Esophagus squamous epithelium (tissue), 5 donors: ENCODE measurements at regions of chr16 and their contacts with region 1.

Region 1: DNA sequence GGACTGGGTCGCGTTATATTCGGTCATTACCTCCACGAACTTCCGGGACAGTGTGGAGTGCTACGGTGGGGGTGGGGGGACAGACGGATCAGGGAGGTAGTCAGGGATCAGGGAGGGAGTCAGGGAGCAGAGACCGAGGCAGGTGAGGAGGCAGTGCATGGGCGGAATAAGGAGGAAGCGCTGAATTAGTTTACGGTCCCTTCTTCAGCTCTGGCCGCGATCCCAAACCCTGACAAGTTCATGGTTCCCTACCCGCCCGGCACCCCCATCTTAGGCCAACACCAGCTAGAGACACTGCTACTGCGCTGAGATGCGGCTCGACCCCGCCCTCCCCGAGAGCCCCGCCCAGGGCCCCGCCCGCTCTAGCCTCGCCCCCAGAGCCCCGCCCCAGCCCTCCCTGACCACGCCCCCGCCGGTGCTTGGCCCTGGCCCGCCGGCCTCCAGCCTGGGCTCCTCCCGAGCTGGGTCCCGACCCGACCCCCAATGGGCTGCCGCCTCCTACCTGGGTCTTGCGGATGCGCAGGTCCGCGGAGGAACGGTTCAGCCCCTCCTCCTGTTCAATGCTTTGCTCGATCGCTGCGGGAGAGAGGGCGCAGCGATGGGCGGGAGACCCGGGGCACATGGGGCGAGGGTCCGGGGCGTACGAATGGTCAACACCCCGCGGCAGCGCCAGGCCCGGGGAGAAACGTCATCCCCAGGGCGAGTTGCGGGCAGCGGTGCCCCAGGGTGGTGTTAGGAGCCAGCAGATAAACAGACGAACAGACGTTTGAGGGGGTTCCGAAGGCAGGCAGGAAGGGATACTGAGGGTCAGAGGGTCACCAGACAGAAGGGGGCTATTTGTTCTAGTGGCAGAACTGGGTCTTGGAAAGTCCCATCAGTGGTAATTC is 12.2 kb downstream of the HSD3B7 start:
- DNase-seq: no peak
- H3K4me3 ChIP-seq: peak overlapping the region; percentile 38 to 83 (median 58)
- H3K27ac ChIP-seq: peak overlapping the region; percentile 76 to 94 (median 84)
- H3K4me1 ChIP-seq: peaks cover 22 to 60% (median 33%) of the 10 kb centered on the region in 3 donors
- H3K27me3 ChIP-seq: no peaks in the 10 kb centered on the region
- CTCF ChIP-seq: no peak
- POLR2A ChIP-seq: peak in 2 of 4 donors; percentile 54 to 76

Region 2: DNA sequence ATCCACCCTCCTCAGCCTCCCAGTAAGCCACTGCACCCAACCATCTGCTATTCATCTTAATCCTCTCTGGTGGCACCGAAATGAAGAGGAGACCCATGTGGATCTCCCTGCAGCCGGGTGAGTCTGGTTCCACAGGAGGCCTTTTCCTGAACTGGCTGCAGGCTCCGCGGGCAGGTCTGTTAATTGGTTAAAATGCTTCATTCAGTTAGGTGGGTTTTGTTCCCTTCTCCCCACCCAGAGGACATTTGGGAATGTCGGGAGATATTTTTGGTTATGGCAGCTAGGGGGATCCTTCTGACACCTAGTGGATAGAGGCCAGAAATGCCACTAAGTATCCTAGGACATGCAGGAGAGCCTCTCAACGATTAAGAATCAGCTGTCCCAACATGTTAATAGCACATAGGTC is 1268.1 kb before region 1 on chr16:
- intact Hi-C with region 1: no loop called
- DNase-seq: no peak
- H3K4me3 ChIP-seq: no peak overlapping the region
- H3K27ac ChIP-seq: no peak overlapping the region
- H3K4me1 ChIP-seq: peaks cover 0 to 6% (median 0%) of the 10 kb centered on the region in 3 donors
- H3K27me3 ChIP-seq: peaks cover 0 to 20% (median 0%) of the 10 kb centered on the region in 4 donors
- CTCF ChIP-seq: peak in 5 of 6 experiments; percentile 28 to 57 (median 43)
- POLR2A ChIP-seq: no peak

Region 3: DNA sequence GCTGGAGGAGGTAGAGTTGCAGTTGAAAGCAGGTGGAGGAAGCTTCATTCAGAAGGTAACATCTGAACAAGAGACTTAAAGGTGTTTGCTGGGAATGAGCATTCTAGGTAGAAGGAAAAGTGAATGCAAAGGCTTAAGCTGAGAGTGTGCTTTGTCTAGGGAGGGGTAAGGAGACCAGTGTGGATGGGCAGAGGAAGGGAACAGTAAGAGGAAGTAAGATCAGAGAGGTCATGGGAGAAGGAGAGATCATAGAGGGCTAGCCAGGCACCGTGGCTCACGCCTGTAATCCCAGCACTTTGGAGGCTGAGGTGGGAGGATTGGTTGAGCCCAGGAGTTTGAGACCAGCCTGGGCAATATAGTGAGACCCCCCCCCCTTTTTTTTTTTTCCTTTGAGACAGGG is 39.4 kb after region 1 on chr16:
- intact Hi-C with region 1: loop called (anchors 5 kb)
- DNase-seq: no peak
- H3K4me3 ChIP-seq: no peak overlapping the region
- H3K27ac ChIP-seq: no peak overlapping the region
- H3K4me1 ChIP-seq: peaks cover 10 to 38% (median 17%) of the 10 kb centered on the region in 3 donors
- H3K27me3 ChIP-seq: no peaks in the 10 kb centered on the region
- CTCF ChIP-seq: no peak
- POLR2A ChIP-seq: no peak